Activated CD4-positive, alpha-beta T cell treated with anti-CD3 and anti-CD28 coated beads for 36 hours (primary cell): ENCODE measurements at regions of chr16 and their contacts with region 1.

Region 1: GRCh38 chr16:23595951-23596720 is at the start of gene NDUFAB1:
- DNase-seq: peak; percentile 96
- ATAC-seq: peak; percentile 97
- H3K4me3 Mint-ChIP-seq: peak within 1 kb of the TSS; percentile 79
- H3K27ac Mint-ChIP-seq: peak within 1 kb of the TSS; percentile 80
- H3K4me1 Mint-ChIP-seq: peaks cover 36% of the 10 kb centered on the region
- H3K27me3 Mint-ChIP-seq: no peaks in the 10 kb centered on the region
- total RNA-seq, gene NDUFAB1: 81.5 to 158 TPM

Region 2: DNA sequence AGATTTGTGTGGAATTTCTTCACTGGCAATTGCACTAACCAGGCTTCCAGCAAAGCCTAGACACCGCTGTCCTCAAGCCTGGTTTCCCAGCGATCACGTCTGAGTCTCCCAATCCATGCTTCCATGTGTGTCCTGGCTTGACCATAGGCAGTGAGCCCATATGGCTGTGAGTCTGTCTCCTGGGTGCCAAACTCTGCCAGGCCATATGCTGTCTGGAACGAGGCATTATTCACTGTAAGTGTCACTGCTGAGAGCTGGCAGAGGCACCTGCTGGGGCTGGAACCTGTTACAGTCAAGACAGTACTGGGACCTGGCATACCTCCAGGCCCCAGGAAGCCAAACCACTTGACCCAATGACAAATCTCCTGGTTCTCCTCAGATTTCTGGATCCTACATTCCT is 721.7 kb before region 1 on chr16:
- CTCF ChIA-PET with region 1: no interaction called
- POLR2A ChIA-PET with region 1: no interaction called
- intact Hi-C with region 1: no loop called
- DNase-seq: no peak
- ATAC-seq: no peak
- H3K4me3 Mint-ChIP-seq: no peak overlapping the region
- H3K27ac Mint-ChIP-seq: no peak overlapping the region
- H3K4me1 Mint-ChIP-seq: no peaks in the 10 kb centered on the region
- H3K27me3 Mint-ChIP-seq: peaks cover 16% of the 10 kb centered on the region

Region 3: GRCh38 chr16:23149349-23149996 is 446.7 kb before region 1 on chr16 and contains the start of gene USP31:
- CTCF ChIA-PET with region 1: no interaction called
- POLR2A ChIA-PET with region 1: no interaction called
- intact Hi-C with region 1: loop called in 1 of 2 experiments (anchors 2 kb)
- DNase-seq: peak; percentile 94
- ATAC-seq: peak; percentile 99
- H3K4me3 Mint-ChIP-seq: peak within 1 kb of the TSS; percentile 86
- H3K27ac Mint-ChIP-seq: peak within 1 kb of the TSS; percentile 86
- H3K4me1 Mint-ChIP-seq: peaks cover 28% of the 10 kb centered on the region
- H3K27me3 Mint-ChIP-seq: no peaks in the 10 kb centered on the region
- total RNA-seq, gene USP31: 5.3 to 5.9 TPM

Region 4: DNA sequence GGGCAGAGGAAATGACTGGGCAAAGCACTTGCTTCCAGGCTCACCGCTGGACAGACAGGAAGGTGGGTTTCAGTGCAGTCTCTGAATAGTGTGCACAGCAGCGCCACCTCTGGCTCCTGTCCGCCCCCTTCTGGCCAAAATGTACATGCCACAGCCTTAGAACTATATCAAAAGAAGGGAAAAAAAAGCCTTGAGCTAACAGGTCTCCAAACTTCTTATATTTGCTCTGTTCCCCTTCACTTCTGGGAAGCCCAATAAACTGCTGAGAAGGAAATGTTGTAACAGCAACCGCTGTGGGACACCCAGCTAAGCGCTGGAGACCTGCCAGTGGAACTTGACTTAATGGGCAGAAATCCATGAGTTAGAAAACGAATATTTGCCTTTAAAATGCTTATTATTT is 160.6 kb before region 1 on chr16:
- CTCF ChIA-PET with region 1: no interaction called
- POLR2A ChIA-PET with region 1: no interaction called
- intact Hi-C with region 1: no loop called
- DNase-seq: peak; percentile 81
- ATAC-seq: peak; percentile 96
- H3K4me3 Mint-ChIP-seq: no peak overlapping the region
- H3K27ac Mint-ChIP-seq: no peak overlapping the region
- H3K4me1 Mint-ChIP-seq: no peaks in the 10 kb centered on the region
- H3K27me3 Mint-ChIP-seq: no peaks in the 10 kb centered on the region

Region 5: DNA sequence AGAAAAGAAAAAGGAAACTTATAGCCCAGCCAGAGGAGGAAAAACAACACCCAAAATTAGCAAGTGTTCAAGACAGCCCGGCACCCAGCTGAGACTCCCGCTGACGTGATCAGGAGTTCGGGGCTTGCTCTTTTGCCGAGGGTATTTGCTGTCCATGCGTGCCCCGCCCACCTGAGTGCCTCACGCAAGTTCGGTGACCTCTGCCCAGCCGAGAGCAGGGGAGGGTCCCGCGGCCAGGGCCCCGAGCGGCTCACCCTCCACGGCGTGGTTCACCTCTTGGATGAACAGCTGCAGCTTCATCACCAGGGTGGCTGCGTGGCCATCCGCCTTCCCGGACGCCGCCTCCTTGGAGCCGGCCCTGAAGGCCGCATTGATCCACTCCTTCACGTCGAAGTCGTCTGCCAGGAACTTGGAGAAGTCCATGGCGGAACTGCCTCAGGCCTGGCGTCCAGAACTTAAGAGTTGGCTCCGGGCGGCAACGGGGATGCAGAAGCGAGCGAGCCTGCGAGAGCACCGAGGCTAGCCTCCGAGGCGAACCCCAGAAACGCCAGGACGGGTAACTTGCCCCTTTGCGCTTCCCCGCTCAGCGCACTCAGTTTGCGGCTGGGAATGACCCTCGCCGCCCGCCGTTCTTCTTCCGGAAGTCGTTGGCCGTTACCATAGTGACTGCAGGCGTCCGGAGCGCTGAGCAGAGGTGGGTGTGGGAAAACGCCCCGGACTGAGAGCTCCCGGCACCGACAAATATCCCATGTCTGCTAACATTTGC is 143.4 kb before region 1 on chr16 and contains the start of gene COG7:
- CTCF ChIA-PET with region 1: no interaction called
- POLR2A ChIA-PET with region 1: no interaction called
- intact Hi-C with region 1: loop called in 1 of 2 experiments (anchors 1 kb)
- DNase-seq: peak; percentile 92
- ATAC-seq: peak; percentile 94
- H3K4me3 Mint-ChIP-seq: peak within 1 kb of the TSS; percentile 92
- H3K27ac Mint-ChIP-seq: peak within 1 kb of the TSS; percentile 93
- H3K4me1 Mint-ChIP-seq: peaks cover 20% of the 10 kb centered on the region
- H3K27me3 Mint-ChIP-seq: no peaks in the 10 kb centered on the region
- total RNA-seq, gene COG7: 18.1 to 19.9 TPM

Region 6: DNA sequence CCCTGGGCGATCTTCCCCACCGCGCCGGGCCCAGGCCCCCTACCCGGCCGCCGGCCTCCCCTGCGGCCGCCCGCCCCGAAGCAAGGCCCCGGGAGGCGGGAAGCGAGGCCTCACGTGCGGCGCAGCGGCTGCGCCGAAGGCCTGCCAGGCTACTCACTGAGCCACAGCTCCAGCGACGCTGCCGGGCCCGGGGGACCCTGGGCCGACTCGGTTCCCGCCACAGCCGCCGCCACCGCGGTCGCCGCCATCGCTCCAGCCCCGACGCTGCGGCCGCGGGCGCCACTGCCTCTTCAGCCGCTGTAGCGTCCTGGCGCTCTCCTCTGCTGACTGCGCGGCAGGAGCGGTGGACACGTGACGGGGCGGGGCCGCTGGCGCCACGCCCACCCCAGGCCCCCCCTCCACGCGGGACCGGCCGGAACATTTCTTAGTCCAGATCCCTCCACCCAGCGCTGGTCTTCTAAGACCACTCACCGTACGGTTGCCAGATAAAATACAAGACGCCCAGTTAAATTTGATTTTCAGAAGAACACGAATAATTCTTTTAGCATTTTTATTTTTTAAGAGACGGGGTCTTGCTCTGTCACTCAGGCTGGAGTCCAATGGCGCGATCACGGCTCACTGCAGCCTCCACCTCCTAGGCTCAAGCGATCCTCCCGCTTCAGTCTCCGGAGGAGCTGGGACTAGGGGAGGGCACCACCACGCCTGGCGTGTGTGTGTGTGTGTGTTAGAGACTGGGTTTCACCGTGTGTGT is 85.8 kb before region 1 on chr16 and contains the start of gene GGA2:
- CTCF ChIA-PET with region 1: no interaction called
- POLR2A ChIA-PET with region 1: no interaction called
- intact Hi-C with region 1: loop called (anchors 1 to 2 kb)
- DNase-seq: peak; percentile 88
- ATAC-seq: peak; percentile 87
- H3K4me3 Mint-ChIP-seq: peak within 1 kb of the TSS; percentile 89
- H3K27ac Mint-ChIP-seq: peak within 1 kb of the TSS; percentile 78
- H3K4me1 Mint-ChIP-seq: peaks cover 48% of the 10 kb centered on the region
- H3K27me3 Mint-ChIP-seq: no peaks in the 10 kb centered on the region
- total RNA-seq, gene GGA2: 86.7 to 114 TPM

Region 7: GRCh38 chr16:23663918-23664317 is 67.8 kb after region 1 on chr16:
- CTCF ChIA-PET with region 1: no interaction called
- POLR2A ChIA-PET with region 1: no interaction called
- intact Hi-C with region 1: no loop called
- DNase-seq: no peak
- ATAC-seq: peak; percentile 49
- H3K4me3 Mint-ChIP-seq: no peak overlapping the region
- H3K27ac Mint-ChIP-seq: no peak overlapping the region
- H3K4me1 Mint-ChIP-seq: peaks cover 12% of the 10 kb centered on the region
- H3K27me3 Mint-ChIP-seq: no peaks in the 10 kb centered on the region

Region 8: DNA sequence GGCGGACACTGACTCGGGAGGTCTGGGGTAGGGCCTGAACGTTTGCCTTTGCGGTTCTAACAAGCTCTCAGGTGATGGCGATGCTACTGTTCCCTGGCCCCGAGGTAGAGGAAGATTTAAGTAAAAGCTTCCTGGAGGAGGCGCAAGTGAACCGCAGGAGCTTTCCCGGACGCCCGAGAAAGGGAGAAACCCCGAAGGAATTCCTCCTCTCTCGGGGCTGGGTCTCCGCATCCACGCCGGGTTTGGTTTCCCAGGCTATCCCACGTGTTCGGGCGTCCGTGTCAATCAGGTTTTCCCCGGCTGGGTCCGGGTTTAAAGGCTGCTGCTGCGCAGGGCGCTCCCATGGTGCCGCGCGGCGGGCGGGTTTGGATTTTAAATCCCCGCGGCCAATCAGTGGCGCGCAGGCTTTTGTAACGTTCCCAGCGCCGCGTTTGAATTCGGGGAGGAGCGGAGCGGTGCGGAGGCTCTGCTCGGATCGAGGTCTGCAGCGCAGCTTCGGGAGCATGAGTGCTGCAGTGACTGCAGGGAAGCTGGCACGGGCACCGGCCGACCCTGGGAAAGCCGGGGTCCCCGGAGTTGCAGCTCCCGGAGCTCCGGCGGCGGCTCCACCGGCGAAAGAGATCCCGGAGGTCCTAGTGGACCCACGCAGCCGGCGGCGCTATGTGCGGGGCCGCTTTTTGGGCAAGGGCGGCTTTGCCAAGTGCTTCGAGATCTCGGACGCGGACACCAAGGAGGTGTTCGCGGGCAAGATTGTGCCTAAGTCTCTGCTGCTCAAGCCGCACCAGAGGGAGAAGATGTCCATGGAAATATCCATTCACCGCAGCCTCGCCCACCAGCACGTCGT is 82.5 kb after region 1 on chr16 and contains the start of gene PLK1:
- CTCF ChIA-PET with region 1: interaction called, 3 read pairs
- POLR2A ChIA-PET with region 1: no interaction called
- intact Hi-C with region 1: loop called in 1 of 2 experiments (anchors 1 kb)
- DNase-seq: peak; percentile 93
- ATAC-seq: peak; percentile 97
- H3K4me3 Mint-ChIP-seq: peak within 1 kb of the TSS; percentile 95
- H3K27ac Mint-ChIP-seq: peak within 1 kb of the TSS; percentile 60
- H3K4me1 Mint-ChIP-seq: peaks cover 16% of the 10 kb centered on the region
- H3K27me3 Mint-ChIP-seq: no peaks in the 10 kb centered on the region
- total RNA-seq, gene PLK1: 91.4 to 120 TPM